Endothelial cell of umbilical vein (primary cell): ENCODE measurements at regions of chr14 and their contacts with region 1.

Region 1: GRCh38 chr14:68577827-68578541 is 214.9 kb downstream of the ZFP36L1 start:
- DNase-seq: peak; percentile 94
- H3K4me3 ChIP-seq: no peak overlapping the region
- H3K27ac ChIP-seq: peak overlapping the region; percentile 77
- H3K4me1 ChIP-seq: peaks cover 40% of the 10 kb centered on the region
- H3K27me3 ChIP-seq: no peaks in the 10 kb centered on the region
- CTCF ChIP-seq: no peak
- POLR2A ChIP-seq: peak; percentile 77

Region 2: GRCh38 chr14:68369281-68370056 is 208.5 kb before region 1 on chr14:
- CTCF ChIA-PET with region 1: no interaction called
- POLR2A ChIA-PET with region 1: no interaction called
- dilution Hi-C with region 1: no loop called
- intact Hi-C with region 1: loop called (anchors 5 kb)
- DNase-seq: no peak
- H3K4me3 ChIP-seq: no peak overlapping the region
- H3K27ac ChIP-seq: no peak overlapping the region
- H3K4me1 ChIP-seq: peaks cover 15% of the 10 kb centered on the region
- H3K27me3 ChIP-seq: no peaks in the 10 kb centered on the region
- CTCF ChIP-seq: no peak
- POLR2A ChIP-seq: no peak

Region 3: DNA sequence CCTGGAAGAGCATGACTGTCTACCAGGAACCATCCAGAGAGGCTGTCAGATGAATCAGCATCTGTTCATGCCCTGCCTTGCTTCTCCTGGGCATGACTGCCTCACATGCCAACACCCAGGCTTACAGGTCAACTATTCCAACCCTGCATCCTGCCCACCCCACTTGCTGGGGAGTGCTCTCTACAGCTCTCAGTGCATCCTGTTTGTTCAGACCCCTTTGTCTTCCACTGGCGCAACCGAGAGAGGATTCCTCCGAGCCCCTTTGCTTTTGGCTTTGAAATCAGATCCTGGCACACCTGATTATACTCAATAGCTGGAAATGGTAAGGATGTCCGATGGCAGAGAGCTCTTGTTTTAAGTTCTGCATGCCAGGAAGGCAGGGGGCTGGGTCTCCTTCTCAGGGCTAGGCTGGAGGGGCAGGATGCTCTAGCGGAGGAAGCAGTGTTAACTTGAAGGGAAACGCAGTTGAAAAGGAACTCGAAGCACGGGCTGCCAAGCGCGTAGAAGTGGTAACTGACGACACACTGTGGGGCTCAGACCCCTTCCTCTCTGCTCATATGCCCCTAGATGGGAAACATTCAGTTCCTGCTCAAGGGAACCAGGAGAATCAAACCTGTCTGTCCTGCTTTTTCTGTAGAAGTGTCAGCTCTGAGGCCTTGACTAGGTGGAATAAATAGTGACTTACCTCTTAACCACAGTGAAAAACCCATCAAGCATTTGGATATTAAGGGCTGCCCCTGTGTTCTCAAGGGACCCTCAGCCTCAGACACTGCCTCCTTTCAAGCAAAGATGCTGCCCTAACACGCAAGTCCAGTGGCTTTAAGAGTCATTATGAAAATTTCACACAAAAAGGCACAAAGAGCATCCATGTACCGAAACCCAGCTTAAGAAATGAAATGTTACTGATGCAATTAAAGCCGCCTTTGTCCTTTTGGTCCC is 82.6 kb before region 1 on chr14:
- CTCF ChIA-PET with region 1: no interaction called
- POLR2A ChIA-PET with region 1: no interaction called
- dilution Hi-C with region 1: no loop called
- intact Hi-C with region 1: loop called (anchors 5 kb)
- DNase-seq: peak; percentile 81
- H3K4me3 ChIP-seq: no peak overlapping the region
- H3K27ac ChIP-seq: peak overlapping the region; percentile 0
- H3K4me1 ChIP-seq: peaks cover 23% of the 10 kb centered on the region
- H3K27me3 ChIP-seq: no peaks in the 10 kb centered on the region
- CTCF ChIP-seq: no peak
- POLR2A ChIP-seq: no peak

Region 4: GRCh38 chr14:68552602-68553001 is 25.4 kb before region 1 on chr14:
- CTCF ChIA-PET with region 1: interaction called, 3 read pairs
- POLR2A ChIA-PET with region 1: no interaction called
- dilution Hi-C with region 1: no loop called
- intact Hi-C with region 1: loop called (anchors 1 kb)
- DNase-seq: peak; percentile 72
- H3K4me3 ChIP-seq: no peak overlapping the region
- H3K27ac ChIP-seq: peak overlapping the region; percentile 71
- H3K4me1 ChIP-seq: peaks cover 70% of the 10 kb centered on the region
- H3K27me3 ChIP-seq: no peaks in the 10 kb centered on the region
- CTCF ChIP-seq: no peak
- POLR2A ChIP-seq: peak; percentile 7

Region 5: GRCh38 chr14:68598621-68599447 is 20.9 kb after region 1 on chr14:
- CTCF ChIA-PET with region 1: no interaction called
- POLR2A ChIA-PET with region 1: no interaction called
- dilution Hi-C with region 1: no loop called
- intact Hi-C with region 1: loop called (anchors 1 kb)
- DNase-seq: peak; percentile 97
- H3K4me3 ChIP-seq: no peak overlapping the region
- H3K27ac ChIP-seq: peak overlapping the region; percentile 82
- H3K4me1 ChIP-seq: peaks cover 24% of the 10 kb centered on the region
- H3K27me3 ChIP-seq: no peaks in the 10 kb centered on the region
- CTCF ChIP-seq: no peak
- POLR2A ChIP-seq: peak; percentile 55

Region 6: GRCh38 chr14:68695326-68695768 is 117.4 kb after region 1 on chr14:
- CTCF ChIA-PET with region 1: no interaction called
- POLR2A ChIA-PET with region 1: no interaction called
- dilution Hi-C with region 1: no loop called
- intact Hi-C with region 1: loop called (anchors 1 kb)
- DNase-seq: peak; percentile 96
- H3K4me3 ChIP-seq: no peak overlapping the region
- H3K27ac ChIP-seq: peak overlapping the region; percentile 80
- H3K4me1 ChIP-seq: peaks cover 26% of the 10 kb centered on the region
- H3K27me3 ChIP-seq: no peaks in the 10 kb centered on the region
- CTCF ChIP-seq: no peak
- POLR2A ChIP-seq: peak; percentile 29